ENCODE measurements at regions of chr10 and their contacts with region 1.

Region 1: DNA sequence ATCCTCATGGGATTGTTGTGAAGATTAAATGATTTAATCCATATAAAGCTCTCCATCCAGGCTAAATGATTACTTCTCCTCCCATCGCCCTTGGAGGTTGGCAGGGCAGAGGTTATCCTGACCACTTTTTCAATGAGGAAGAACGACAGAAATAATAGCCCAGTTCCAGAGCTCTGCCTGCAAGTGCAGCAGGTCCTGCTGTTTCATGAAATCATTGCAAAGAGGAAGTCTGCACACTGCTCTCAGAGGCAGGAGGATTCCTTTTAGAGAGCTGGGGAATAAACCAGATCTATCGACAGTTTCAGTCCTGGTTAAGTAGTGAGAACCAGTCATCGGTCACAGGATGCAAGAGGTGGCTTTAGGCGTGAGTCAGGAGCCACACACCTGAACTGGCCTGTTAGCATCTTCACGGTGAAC is 25.0 kb upstream of the CDH23 start:
- DNase-seq: no peak
- H3K4me3 ChIP-seq: no peak overlapping the region
- H3K27ac ChIP-seq: peak overlapping the region in 1 of 5 donors; percentile 74
- H3K4me1 ChIP-seq: peaks cover 0 to 5% of the 10 kb centered on the region in 2 donors
- H3K27me3 ChIP-seq: no peaks in the 10 kb centered on the region
- CTCF ChIP-seq: no peak
- POLR2A ChIP-seq: no peak

Region 2: GRCh38 chr10:71326464-71326881 is 45.3 kb before region 1 on chr10:
- intact Hi-C with region 1: loop called in 1 of 2 experiments (anchors 5 kb)
- DNase-seq: no peak
- H3K4me3 ChIP-seq: no peak overlapping the region
- H3K27ac ChIP-seq: no peak overlapping the region
- H3K4me1 ChIP-seq: no peaks in the 10 kb centered on the region
- H3K27me3 ChIP-seq: no peaks in the 10 kb centered on the region
- CTCF ChIP-seq: no peak
- POLR2A ChIP-seq: no peak

Measured in adrenal gland (tissue), 19 donors.